WTC11 (cell line): ENCODE measurements at regions of chr11 and their contacts with region 1.

Region 1: DNA sequence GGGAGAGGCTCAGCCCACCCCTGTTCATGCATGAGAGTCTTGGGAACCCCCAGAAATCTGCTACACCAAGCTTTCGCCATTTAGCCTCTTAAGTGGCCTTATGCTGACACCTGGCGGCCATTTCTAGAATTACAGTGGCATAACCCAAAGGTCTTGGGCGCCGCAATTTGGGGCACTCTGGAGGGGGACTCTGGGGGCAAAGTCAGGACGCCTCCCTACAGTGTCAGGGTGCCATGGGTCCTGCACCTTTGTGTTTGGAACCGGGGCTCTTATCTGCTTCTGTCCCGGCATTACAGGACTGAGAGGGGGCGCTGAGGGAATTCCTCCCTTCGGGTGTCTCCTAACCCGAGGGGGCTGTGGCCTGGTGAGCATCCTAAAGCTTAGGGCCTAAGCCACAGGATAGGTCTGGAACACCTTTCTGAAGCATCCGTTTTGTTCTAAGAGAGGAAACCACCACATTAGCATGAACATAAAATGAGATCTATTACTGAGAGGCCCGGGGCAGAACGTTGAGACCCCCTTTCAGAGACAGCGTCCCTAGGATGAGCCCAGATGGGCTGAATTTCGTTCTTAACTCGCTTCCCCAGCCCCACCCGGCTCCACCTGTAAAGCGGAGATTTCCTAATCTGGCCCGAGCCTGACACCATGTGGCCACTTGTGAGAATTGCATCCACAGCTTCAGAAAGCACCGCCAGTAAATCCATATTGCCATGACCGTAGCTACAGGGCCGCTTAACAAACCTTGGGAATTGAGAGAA is 9.3 kb downstream of the INS start:
- DNase-seq: peak; percentile 91
- ATAC-seq: peak; percentile 50
- H3K4me3 Mint-ChIP-seq: no peak overlapping the region
- H3K27ac Mint-ChIP-seq: no peak overlapping the region
- H3K4me1 Mint-ChIP-seq: peaks cover 13% of the 10 kb centered on the region
- H3K27me3 Mint-ChIP-seq: peaks cover 45% of the 10 kb centered on the region
- CTCF ChIP-seq: peak; percentile 89

Region 2: GRCh38 chr11:1694064-1694845 is 457.4 kb before region 1 on chr11:
- CTCF ChIA-PET with region 1: interaction called, 51 read pairs
- POLR2A ChIA-PET with region 1: no interaction called
- DNase-seq: peak; percentile 92
- ATAC-seq: peak; percentile 86
- H3K4me3 Mint-ChIP-seq: peak overlapping the region; percentile 35; the same call in 1 of the 2 replicates
- H3K27ac Mint-ChIP-seq: no peak overlapping the region
- H3K4me1 Mint-ChIP-seq: peaks cover 3% of the 10 kb centered on the region
- H3K27me3 Mint-ChIP-seq: peaks cover 22% of the 10 kb centered on the region
- CTCF ChIP-seq: peak; percentile 93

Region 3: GRCh38 chr11:1854949-1855885 is 296.5 kb before region 1 on chr11:
- CTCF ChIA-PET with region 1: interaction called, 13 read pairs
- POLR2A ChIA-PET with region 1: no interaction called
- DNase-seq: no peak
- ATAC-seq: no peak
- H3K4me3 Mint-ChIP-seq: no peak overlapping the region
- H3K27ac Mint-ChIP-seq: no peak overlapping the region
- H3K4me1 Mint-ChIP-seq: no peaks in the 10 kb centered on the region
- H3K27me3 Mint-ChIP-seq: no peaks in the 10 kb centered on the region; the same call in 1 of the 2 replicates
- CTCF ChIP-seq: no peak

Region 4: DNA sequence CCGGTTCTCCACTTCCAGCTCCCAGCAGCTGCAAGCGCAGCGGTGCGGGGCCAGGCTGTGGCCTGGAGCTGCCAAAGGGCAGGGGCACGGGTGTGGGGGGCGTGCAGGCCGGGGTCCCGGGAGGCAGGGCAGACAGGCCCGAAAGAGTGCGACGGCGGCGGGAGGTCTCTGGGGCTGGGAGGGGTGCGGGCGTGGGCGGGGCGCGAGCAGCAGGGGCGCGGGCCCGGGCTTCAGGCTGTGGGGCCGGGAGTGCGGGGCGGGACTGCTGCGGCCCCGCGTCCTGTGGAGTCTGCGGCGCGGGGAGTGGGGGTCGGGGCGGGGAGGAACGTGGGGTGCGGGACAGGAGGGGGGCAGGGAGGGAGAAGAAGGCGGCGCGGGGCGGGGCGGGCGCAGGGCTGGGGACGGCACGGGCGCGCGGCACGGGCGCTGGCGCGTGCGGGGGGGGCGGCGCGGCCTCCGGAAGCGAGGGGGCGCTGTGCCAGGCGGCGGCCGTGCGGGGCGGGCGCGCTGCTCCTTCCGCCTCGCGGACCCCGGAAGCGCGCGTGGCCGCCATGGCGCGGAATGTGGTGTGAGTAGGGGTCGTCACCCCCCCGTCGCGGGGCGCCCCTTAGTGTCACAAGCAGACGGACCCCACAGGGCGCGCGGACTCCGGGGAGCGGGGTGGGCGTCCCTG is 204.7 kb before region 1 on chr11 and contains the start of gene MRPL23:
- CTCF ChIA-PET with region 1: interaction called, 39 read pairs
- POLR2A ChIA-PET with region 1: no interaction called
- DNase-seq: no peak
- ATAC-seq: peak; percentile 27
- H3K4me3 Mint-ChIP-seq: no peak within 1 kb of the TSS
- H3K27ac Mint-ChIP-seq: no peak within 1 kb of the TSS
- H3K4me1 Mint-ChIP-seq: peaks cover 3% of the 10 kb centered on the region
- H3K27me3 Mint-ChIP-seq: no peaks in the 10 kb centered on the region
- CTCF ChIP-seq: no peak
- total RNA-seq, gene MRPL23: 59.4 to 73.0 TPM (median 61.0 TPM) in 3 replicates

Region 5: DNA sequence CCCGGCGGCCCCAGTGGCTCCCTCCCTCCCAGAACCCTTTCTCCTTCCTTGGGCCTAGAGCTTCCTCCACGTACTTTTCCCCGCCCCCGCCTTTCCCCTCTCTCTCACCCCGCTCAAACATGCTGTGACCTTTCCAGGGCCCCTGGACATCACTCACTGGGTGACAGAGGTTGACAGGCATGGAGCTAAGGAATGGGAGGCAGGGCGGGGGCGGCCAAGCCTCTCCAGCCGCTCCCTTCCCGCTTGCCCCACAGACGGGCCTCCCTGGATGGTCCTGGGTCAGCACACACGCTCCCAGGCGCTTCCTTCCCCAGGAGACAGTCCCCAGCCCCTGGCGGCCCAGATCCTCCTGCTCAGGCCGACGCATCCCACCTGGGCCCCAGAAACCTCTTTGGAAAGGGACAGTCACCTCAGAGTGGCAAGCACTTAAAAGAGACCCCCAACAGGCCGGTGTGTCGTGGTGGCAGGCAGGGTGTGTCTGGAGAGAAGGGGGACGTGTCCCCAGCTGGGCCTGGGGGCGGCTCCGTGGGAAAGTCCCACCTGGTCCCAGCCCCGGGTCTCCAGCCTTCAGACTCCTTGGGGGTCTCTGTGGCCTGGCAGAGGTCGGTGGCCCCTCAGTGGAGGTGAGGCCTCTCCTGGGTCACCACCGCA is 162.9 kb before region 1 on chr11:
- CTCF ChIA-PET with region 1: interaction called, 16 read pairs
- POLR2A ChIA-PET with region 1: no interaction called
- DNase-seq: no peak
- ATAC-seq: peak; percentile 44; the same call in 1 of the 2 replicates
- H3K4me3 Mint-ChIP-seq: no peak overlapping the region
- H3K27ac Mint-ChIP-seq: no peak overlapping the region
- H3K4me1 Mint-ChIP-seq: no peaks in the 10 kb centered on the region
- H3K27me3 Mint-ChIP-seq: no peaks in the 10 kb centered on the region
- CTCF ChIP-seq: no peak

Region 6: GRCh38 chr11:2092956-2093412 is 58.7 kb before region 1 on chr11:
- CTCF ChIA-PET with region 1: interaction called, 11 read pairs
- POLR2A ChIA-PET with region 1: no interaction called
- DNase-seq: no peak
- ATAC-seq: no peak
- H3K4me3 Mint-ChIP-seq: no peak overlapping the region
- H3K27ac Mint-ChIP-seq: no peak overlapping the region
- H3K4me1 Mint-ChIP-seq: peaks cover 12% of the 10 kb centered on the region
- H3K27me3 Mint-ChIP-seq: peaks cover 4% of the 10 kb centered on the region
- CTCF ChIP-seq: no peak

Region 7: DNA sequence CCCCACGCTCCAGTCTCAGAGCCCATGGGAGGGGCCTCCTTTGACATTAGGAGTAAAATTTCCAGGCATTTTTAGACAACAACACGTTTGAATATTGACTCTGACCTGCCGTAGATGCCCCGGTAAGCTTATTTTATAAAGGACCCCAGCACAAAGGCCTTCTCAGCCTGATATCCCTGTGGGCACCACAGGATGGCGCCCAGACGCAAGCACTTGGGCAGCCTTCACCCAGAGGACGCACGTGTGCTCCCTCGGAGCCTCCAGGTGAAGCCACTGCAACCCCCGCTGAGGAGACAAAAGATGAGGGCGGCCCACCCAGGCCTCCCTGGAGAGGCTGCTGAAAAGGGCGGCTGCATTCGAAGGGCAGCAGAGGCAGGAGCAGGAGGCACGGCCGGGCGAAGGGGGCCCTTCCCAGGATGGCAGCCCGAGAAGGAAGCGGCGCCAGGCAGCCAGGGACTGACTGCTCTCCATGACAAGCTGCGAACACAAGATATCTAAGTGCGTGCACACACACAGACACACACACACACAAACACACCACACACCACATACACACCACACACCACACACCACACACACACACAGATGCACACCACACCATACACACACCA is 35.1 kb after region 1 on chr11:
- CTCF ChIA-PET with region 1: interaction called, 11 read pairs
- POLR2A ChIA-PET with region 1: no interaction called
- DNase-seq: peak; percentile 56
- ATAC-seq: peak; percentile 78
- H3K4me3 Mint-ChIP-seq: no peak overlapping the region
- H3K27ac Mint-ChIP-seq: no peak overlapping the region
- H3K4me1 Mint-ChIP-seq: no peaks in the 10 kb centered on the region
- H3K27me3 Mint-ChIP-seq: peaks cover 5% of the 10 kb centered on the region
- CTCF ChIP-seq: peak; percentile 41